Calu3 (cell line): ENCODE measurements at regions of chrX and their contacts with region 1.

Region 1: GRCh38 chrX:13646154-13646549 is 6.8 kb upstream of the TCEANC start:
- DNase-seq: peak; percentile 71
- H3K4me3 Mint-ChIP-seq: no peak overlapping the region
- H3K27ac Mint-ChIP-seq: peak overlapping the region; percentile 24
- H3K4me1 Mint-ChIP-seq: peaks cover 27% of the 10 kb centered on the region
- H3K27me3 Mint-ChIP-seq: no peaks in the 10 kb centered on the region
- CTCF ChIP-seq: peak; percentile 34

Region 2: GRCh38 chrX:13506574-13506973 is 139.6 kb before region 1 on chrX:
- CTCF ChIA-PET with region 1: interaction called, 26 read pairs
- intact Hi-C with region 1: loop called (anchors 1 kb)
- DNase-seq: peak; percentile 42
- H3K4me3 Mint-ChIP-seq: no peak overlapping the region
- H3K27ac Mint-ChIP-seq: no peak overlapping the region
- H3K4me1 Mint-ChIP-seq: no peaks in the 10 kb centered on the region
- H3K27me3 Mint-ChIP-seq: no peaks in the 10 kb centered on the region
- CTCF ChIP-seq: peak; percentile 41

Region 3: GRCh38 chrX:13520936-13521335 is 125.2 kb before region 1 on chrX:
- CTCF ChIA-PET with region 1: interaction called, 5 read pairs
- intact Hi-C with region 1: loop called (anchors 5 kb)
- DNase-seq: no peak
- H3K4me3 Mint-ChIP-seq: no peak overlapping the region
- H3K27ac Mint-ChIP-seq: no peak overlapping the region
- H3K4me1 Mint-ChIP-seq: peaks cover 17% of the 10 kb centered on the region
- H3K27me3 Mint-ChIP-seq: no peaks in the 10 kb centered on the region
- CTCF ChIP-seq: no peak